ENCODE measurements at regions of chr11 and their contacts with region 1.

Region 1: GRCh38 chr11:86497181-86497701 is 122.6 kb downstream of the CCDC81 start:
- DNase-seq: no peak
- H3K4me3 ChIP-seq: no peak overlapping the region
- H3K27ac ChIP-seq: no peak overlapping the region
- H3K4me1 ChIP-seq: no peaks in the 10 kb centered on the region
- H3K27me3 ChIP-seq: no peaks in the 10 kb centered on the region
- CTCF ChIP-seq: no peak
- EP300 ChIP-seq: no peak
- POLR2A ChIP-seq: no peak

Region 2: GRCh38 chr11:86513700-86514373 is 16.6 kb after region 1 on chr11:
- intact Hi-C with region 1: loop called in 1 of 4 experiments (anchors 1 kb)
- DNase-seq: no peak
- H3K4me3 ChIP-seq: no peak overlapping the region
- H3K27ac ChIP-seq: no peak overlapping the region
- H3K4me1 ChIP-seq: peaks cover 6% of the 10 kb centered on the region
- H3K27me3 ChIP-seq: no peaks in the 10 kb centered on the region
- CTCF ChIP-seq: no peak
- EP300 ChIP-seq: no peak
- POLR2A ChIP-seq: no peak